ENCODE measurements at regions of chr1 and their contacts with region 1.

Region 1: GRCh38 chr1:220786337-220787068 is at the start of gene MTARC1:
- DNase-seq: peak; percentile 80
- ATAC-seq: peak; percentile 92
- H3K4me3 Mint-ChIP-seq: peak within 1 kb of the TSS; percentile 80
- H3K27ac Mint-ChIP-seq: peak within 1 kb of the TSS; percentile 36
- H3K4me1 Mint-ChIP-seq: peaks cover 26% of the 10 kb centered on the region
- H3K27me3 Mint-ChIP-seq: peaks cover 3% of the 10 kb centered on the region; the same call in 1 of the 2 replicates
- CTCF ChIP-seq: no peak
- total RNA-seq, gene MTARC1: 25.8 to 33.6 TPM (median 29.5 TPM) in 3 replicates

Region 2: GRCh38 chr1:220748089-220748934 is 38.2 kb before region 1 on chr1 and contains the start of gene MTARC2:
- CTCF ChIA-PET with region 1: interaction called, 8 read pairs
- POLR2A ChIA-PET with region 1: interaction called, 17 read pairs
- DNase-seq: peak; percentile 81
- ATAC-seq: peak; percentile 92
- H3K4me3 Mint-ChIP-seq: peak within 1 kb of the TSS; percentile 88
- H3K27ac Mint-ChIP-seq: peak within 1 kb of the TSS; percentile 91
- H3K4me1 Mint-ChIP-seq: peaks cover 49% of the 10 kb centered on the region
- H3K27me3 Mint-ChIP-seq: peaks cover 43% of the 10 kb centered on the region
- CTCF ChIP-seq: no peak
- total RNA-seq, gene MTARC2: 12.5 to 15.5 TPM (median 15.2 TPM) in 3 replicates

Region 3: DNA sequence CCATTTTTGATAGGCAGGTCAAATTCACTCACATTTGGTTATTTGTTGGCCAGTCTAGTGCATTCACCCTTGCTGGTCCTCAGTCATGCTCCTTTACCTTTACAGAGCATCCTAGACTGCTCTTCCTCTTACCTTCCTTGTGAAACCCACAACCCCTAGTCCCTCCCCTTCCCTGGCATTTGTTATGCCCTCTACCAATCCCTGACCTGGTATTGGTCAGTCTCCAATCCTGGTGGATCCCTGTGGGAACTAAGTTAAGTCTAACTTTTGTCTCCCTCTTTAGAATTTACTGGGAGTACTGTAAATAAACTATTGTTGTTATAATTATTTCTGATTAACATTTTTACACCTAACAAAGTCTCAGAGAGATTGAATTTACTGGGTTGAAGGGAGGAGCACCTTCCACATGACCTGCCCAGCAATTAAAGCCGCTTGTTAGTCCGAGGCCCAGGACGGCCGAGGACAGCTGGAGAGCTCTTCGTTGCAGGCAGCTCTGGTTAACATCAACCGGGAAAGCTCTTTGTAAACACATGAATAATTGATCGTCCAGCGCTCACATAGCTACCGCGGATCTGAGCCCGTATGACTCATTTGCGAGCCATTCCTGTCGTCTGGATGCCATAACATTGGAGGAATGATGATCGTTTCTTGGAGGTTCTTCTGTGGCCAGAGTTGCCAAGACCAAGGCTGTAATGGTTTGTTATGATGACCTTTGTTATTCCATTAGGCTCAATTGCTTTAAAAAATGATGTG is 32.1 kb after region 1 on chr1:
- CTCF ChIA-PET with region 1: no interaction called
- POLR2A ChIA-PET with region 1: no interaction called
- DNase-seq: no peak
- ATAC-seq: peak; percentile 99
- H3K4me3 Mint-ChIP-seq: no peak overlapping the region; the same call in 1 of the 2 replicates
- H3K27ac Mint-ChIP-seq: peak overlapping the region; percentile 24; the same call in 1 of the 2 replicates
- H3K4me1 Mint-ChIP-seq: peaks cover 21% of the 10 kb centered on the region
- H3K27me3 Mint-ChIP-seq: no peaks in the 10 kb centered on the region; the same call in 1 of the 2 replicates
- CTCF ChIP-seq: no peak

Region 4: GRCh38 chr1:220943319-220943996 is 157.0 kb after region 1 on chr1:
- CTCF ChIA-PET with region 1: no interaction called
- POLR2A ChIA-PET with region 1: no interaction called
- DNase-seq: no peak
- ATAC-seq: no peak
- H3K4me3 Mint-ChIP-seq: no peak overlapping the region
- H3K27ac Mint-ChIP-seq: no peak overlapping the region
- H3K4me1 Mint-ChIP-seq: no peaks in the 10 kb centered on the region
- H3K27me3 Mint-ChIP-seq: no peaks in the 10 kb centered on the region
- CTCF ChIP-seq: no peak

Measured in WTC11 (cell line).